HEK293T (cell line): ENCODE measurements at regions of chr12 and their contacts with region 1.

Region 1: DNA sequence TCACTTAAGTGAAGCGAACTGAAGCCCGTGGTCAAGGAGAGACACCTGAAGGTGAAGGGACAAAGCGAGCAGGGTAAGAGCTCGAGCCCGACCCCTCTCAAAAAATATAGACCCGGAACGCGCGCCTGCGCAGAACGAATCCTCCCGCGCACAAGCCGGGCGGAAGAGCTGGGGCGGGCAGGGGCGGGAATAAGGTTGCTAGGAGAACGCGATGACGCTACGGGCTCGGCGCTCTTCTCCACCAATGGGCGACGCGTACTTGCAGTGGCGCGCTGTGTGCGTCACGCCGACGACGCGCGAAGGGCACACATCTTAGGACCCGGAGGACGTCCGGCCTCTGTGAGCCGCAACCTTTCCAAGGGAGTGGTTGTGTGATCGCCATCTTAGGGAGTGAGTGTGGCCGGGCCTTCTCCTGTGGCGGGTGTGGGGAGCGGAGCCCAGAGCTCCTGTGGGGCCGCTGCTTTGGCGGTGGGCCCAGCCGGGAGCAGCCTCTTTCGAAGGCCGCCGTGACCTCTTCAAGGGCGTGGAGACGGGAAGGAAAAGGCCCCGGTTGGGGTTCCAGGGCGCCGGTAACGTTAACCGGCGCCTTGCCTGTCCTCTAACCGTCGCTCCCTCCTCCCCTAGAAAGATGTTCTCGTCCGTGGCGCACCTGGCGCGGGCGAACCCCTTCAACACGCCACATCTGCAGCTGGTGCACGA is at the start of gene SLC25A3:
- DNase-seq: peak; percentile 98

Region 2: DNA sequence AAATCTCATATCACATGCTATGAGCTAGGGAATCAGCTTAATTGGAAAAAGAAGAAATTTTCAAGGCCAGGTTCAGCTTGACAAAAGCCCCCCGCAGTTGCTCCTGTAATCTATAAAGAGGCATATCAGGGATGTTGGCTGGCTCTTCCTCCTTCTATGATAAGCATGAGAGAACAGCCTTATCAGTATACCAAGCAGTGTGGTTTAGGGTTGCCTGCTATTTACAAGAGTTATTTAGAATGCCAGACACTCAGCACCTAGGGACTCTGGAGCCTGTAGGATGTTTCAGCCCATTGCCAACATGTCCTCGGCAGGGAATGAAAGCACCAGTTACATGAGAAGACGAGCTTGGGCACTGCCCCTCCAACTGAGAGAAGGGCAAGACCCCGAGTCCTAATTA is 167.6 kb before region 1 on chr12:
- CTCF ChIA-PET with region 1: no interaction called
- POLR2A ChIA-PET with region 1: no interaction called
- DNase-seq: no peak

Region 3: DNA sequence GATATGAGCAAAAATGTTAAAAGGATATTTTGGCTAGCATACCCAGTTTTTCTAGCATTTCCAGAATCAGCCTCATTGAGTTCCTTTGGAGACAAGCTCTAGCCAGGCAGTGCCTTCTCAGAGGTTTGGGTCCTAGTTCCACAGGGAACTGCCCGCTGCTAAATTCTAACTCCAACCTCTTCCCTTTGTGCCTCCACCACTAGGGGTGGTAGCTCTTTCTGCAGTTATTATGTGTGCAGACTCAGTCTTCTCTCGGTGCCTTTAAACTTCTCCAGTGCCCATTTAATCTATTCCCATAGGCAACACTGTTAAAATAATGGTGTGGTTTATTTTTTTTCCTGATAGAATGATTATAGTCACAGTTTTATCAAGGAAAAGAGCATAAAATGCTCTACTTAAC is 21.5 kb before region 1 on chr12:
- CTCF ChIA-PET with region 1: interaction called, 12 read pairs
- POLR2A ChIA-PET with region 1: interaction called, 12 read pairs
- DNase-seq: peak; percentile 48

Region 4: DNA sequence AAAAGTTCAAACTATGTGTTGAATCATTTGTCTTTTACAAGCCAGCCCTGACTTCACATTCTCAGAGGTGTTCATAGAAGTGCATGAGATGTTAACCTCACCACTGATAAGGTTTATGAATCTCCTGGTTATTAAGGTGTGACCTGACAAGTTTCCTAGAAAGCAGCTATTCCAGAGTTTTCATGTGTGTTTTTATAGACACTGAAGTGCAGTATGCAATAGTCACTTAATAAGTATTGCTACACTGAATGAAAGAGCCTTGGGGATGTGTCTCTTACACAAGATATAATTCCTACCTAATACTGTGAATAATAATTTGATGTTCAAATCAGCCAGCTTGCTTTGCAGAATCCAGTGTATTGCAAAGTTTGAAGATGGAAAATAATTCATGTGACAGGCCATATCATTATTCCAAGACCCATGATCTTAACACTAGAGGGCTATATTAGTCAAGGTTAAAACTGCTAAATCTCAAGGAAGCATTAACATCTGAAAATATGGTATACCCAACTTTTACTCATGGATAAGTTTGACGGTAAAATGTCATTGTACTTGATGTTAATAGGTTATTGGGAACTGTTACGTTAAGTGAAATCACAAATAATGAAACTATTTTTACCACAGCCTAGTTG is 13.0 kb after region 1 on chr12:
- CTCF ChIA-PET with region 1: no interaction called
- POLR2A ChIA-PET with region 1: interaction called, 31 read pairs
- DNase-seq: no peak

Region 5: DNA sequence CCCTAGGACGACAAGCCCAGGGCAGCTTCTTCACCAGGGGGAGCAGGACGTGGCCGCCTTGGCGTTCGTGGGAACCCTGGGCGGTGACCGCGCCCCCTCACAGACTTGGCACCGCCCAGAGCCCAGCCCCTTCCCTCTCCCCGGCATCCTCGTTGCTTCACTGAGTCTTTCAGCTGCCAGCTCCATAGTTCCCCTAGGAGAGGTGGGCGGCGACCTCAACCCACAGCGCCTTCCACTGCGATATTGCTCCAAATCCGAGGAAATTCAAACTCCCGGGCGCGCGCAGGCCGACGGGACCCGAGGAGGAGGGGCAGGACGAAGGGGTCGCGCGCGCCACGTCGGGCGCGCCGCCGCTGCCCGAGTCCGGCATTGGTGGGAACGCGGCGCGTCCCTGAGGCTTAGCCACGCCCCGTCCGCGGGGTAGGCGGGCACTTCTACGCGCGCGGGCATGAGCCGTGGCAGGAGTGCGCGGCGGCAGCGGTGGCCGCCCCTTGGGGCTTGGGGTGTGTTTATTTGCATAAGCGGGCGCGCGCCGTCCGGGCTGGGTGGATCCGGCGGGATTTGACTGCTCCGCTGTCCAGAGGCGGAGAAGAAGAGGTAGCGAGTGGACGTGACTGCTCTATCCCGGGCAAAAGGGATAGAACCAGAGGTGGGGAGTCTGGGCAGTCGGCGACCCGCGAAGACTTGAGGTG is 51.4 kb after region 1 on chr12 and contains the starts of genes APAF1 and IKBIP:
- CTCF ChIA-PET with region 1: interaction called, 3 read pairs
- POLR2A ChIA-PET with region 1: interaction called, 23 read pairs
- DNase-seq: peak; percentile 93